Activated CD4-positive, alpha-beta T cell treated with anti-CD3 and anti-CD28 coated beads, Interleukin-2, amount 10 ng/mL, durations not matched to agents 24 days and 14 days (primary cell): ENCODE measurements at regions of chr7 and their contacts with region 1.

Region 1: DNA sequence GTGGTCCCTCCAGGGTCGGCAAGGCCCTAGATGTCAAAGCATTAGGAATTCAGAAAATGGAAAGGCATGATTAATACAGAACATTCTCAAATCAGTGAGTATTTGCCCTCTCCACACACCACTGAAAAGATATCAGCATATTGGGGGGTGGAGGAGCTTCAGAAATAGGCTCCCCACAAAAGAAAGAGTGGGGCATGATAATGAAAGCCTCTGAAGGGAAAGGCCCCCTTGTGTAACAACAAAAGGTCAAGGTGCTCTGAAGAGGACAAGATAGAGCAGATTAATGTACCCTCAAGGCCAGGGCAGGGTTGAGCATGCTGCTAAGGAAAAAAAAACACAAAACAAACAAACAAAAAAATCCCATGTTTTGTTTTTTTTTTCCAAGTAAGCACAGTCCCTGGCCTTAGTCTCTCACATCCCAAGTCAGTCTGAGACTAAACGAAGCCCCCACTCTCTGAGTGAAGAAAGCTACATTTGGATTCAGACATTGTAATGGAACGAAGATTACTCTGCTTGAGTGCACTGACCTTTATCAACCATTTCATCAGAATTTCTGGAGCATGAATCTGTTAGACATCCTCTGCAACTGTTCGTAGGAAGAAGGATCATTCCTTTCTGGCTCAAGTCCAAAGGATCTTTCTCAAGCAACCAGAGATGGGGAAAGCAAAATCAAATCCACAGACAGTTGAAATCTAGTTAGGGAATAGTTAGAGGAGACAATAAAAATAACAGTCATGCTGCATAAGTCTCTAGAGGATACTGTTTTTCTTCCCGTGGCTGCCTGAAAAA is 27.4 kb upstream of the DGKI start:
- DNase-seq: no peak
- H3K4me3 Mint-ChIP-seq: peak overlapping the region; percentile 13
- H3K27ac Mint-ChIP-seq: peak overlapping the region; percentile 92
- H3K4me1 Mint-ChIP-seq: peaks cover 22% of the 10 kb centered on the region
- H3K27me3 Mint-ChIP-seq: peaks cover 2% of the 10 kb centered on the region

Region 2: GRCh38 chr7:137772748-137773147 is 101.4 kb before region 1 on chr7:
- intact Hi-C with region 1: loop called (anchors 5 kb)
- DNase-seq: no peak
- H3K4me3 Mint-ChIP-seq: peak overlapping the region; percentile 75
- H3K27ac Mint-ChIP-seq: peak overlapping the region; percentile 34
- H3K4me1 Mint-ChIP-seq: peaks cover 3% of the 10 kb centered on the region
- H3K27me3 Mint-ChIP-seq: no peaks in the 10 kb centered on the region

Region 3: DNA sequence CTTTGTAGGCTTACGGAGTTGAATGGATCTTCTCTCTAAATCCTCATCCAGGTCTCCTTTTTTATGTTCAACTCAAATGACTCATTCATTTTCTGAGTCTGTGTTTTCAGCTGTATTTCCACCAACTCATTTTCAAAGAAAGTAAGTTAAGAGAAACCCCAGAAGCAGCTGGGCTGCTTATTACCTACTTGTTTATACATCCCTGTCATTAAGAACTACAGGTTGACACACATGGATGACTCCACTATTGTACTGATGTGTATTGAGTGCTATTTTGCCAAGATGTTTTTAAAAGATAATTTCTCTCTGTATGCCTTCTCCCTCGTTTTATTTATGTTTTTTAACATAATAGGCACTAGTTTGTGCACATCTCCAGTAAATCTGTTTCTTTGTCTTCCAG is 69.3 kb before region 1 on chr7:
- intact Hi-C with region 1: no loop called
- DNase-seq: no peak
- H3K4me3 Mint-ChIP-seq: no peak overlapping the region
- H3K27ac Mint-ChIP-seq: no peak overlapping the region
- H3K4me1 Mint-ChIP-seq: peaks cover 2% of the 10 kb centered on the region
- H3K27me3 Mint-ChIP-seq: no peaks in the 10 kb centered on the region

Region 4: GRCh38 chr7:137933270-137934017 is 59.3 kb after region 1 on chr7:
- intact Hi-C with region 1: no loop called
- DNase-seq: no peak
- H3K4me3 Mint-ChIP-seq: no peak overlapping the region
- H3K27ac Mint-ChIP-seq: peak overlapping the region; percentile 38
- H3K4me1 Mint-ChIP-seq: peaks cover 38% of the 10 kb centered on the region
- H3K27me3 Mint-ChIP-seq: no peaks in the 10 kb centered on the region